Activated CD4-positive, alpha-beta T cell treated with anti-CD3 and anti-CD28 coated beads, Interleukin-2, amount 10 ng/mL, durations not matched to agents 24 days and 14 days (primary cell): ENCODE measurements at regions of chr2 and their contacts with region 1.

Region 1: GRCh38 chr2:206800506-206801417 is 35.4 kb downstream of the FASTKD2 start:
- DNase-seq: peak; percentile 86
- H3K4me3 Mint-ChIP-seq: peak overlapping the region; percentile 69
- H3K27ac Mint-ChIP-seq: peak overlapping the region; percentile 12
- H3K4me1 Mint-ChIP-seq: peaks cover 20% of the 10 kb centered on the region
- H3K27me3 Mint-ChIP-seq: no peaks in the 10 kb centered on the region

Region 2: DNA sequence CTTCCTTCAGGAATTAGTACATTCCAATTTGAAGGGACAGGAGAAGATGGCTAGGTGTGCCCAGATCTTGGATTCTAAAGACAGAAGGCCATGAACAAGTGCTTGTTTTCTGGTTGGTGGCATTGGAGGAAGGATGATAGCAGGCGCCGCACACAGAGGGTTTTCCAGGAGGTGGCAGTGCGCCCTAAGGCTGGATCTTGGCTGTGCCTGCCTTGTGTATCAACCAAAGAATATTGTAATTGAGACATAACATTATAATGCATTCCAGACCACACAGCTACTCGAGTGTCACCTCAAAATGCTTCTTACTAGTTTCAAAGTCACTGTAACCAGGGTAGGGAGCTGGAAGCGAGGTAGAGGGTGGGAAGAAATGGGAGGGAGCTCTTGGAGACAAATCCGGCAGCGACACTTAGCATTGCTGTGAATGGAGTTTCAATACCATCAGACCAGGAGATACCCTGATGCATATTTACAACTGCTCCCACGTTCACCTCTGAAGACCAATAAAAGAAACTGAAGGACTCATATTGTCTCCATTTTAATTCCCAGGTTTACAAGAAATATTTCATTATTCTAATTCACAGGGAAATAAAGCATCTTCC is 181.1 kb after region 1 on chr2:
- intact Hi-C with region 1: loop called (anchors 5 kb)
- DNase-seq: peak; percentile 84
- H3K4me3 Mint-ChIP-seq: no peak overlapping the region
- H3K27ac Mint-ChIP-seq: no peak overlapping the region
- H3K4me1 Mint-ChIP-seq: peaks cover 8% of the 10 kb centered on the region
- H3K27me3 Mint-ChIP-seq: peaks cover 8% of the 10 kb centered on the region

Region 3: GRCh38 chr2:207046724-207047123 is 246.0 kb after region 1 on chr2:
- intact Hi-C with region 1: loop called (anchors 2 kb)
- DNase-seq: peak; percentile 80
- H3K4me3 Mint-ChIP-seq: peak overlapping the region; percentile 28
- H3K27ac Mint-ChIP-seq: peak overlapping the region; percentile 31
- H3K4me1 Mint-ChIP-seq: peaks cover 12% of the 10 kb centered on the region
- H3K27me3 Mint-ChIP-seq: peaks cover 6% of the 10 kb centered on the region

Region 4: GRCh38 chr2:207223051-207223450 is 422.3 kb after region 1 on chr2:
- intact Hi-C with region 1: loop called (anchors 10 kb)
- DNase-seq: peak; percentile 59
- H3K4me3 Mint-ChIP-seq: no peak overlapping the region
- H3K27ac Mint-ChIP-seq: peak overlapping the region; percentile 59
- H3K4me1 Mint-ChIP-seq: peaks cover 35% of the 10 kb centered on the region
- H3K27me3 Mint-ChIP-seq: peaks cover 6% of the 10 kb centered on the region